ENCODE measurements at regions of chr13 and their contacts with region 1.

Region 1: DNA sequence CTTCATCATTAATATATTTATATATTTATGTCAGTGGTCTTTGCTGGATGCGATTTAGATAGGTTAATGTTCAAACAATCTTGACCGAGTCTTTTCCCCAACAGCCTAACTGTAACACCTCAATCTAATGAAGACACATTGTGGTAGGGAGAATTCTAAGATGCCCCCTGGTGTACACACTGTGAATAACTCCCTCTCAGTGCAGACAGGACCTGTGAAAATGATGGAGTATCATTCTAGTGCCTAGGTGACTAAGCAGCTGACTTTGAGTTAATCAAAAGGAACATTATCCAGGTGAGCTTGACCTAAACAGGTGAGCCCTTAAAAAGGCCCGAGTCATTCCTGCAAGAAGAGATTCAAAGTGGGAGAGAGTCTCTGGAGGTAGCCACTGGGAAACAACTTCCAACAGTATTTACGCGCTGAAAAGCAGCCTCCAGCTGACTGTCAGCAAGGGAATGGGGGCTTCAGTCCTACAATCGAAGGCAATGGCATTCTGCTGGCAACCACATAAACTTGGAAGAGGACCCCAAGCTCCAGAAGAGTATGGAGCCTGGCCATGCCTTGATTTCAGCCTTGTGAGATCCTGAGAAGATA is 28.0 kb upstream of the KBTBD7 start:
- DNase-seq: no peak
- ATAC-seq: peak; percentile 99
- H3K4me3 Mint-ChIP-seq: no peak overlapping the region
- H3K27ac Mint-ChIP-seq: no peak overlapping the region
- H3K4me1 Mint-ChIP-seq: peaks cover 3% of the 10 kb centered on the region
- H3K27me3 Mint-ChIP-seq: no peaks in the 10 kb centered on the region
- CTCF ChIP-seq: no peak

Region 2: DNA sequence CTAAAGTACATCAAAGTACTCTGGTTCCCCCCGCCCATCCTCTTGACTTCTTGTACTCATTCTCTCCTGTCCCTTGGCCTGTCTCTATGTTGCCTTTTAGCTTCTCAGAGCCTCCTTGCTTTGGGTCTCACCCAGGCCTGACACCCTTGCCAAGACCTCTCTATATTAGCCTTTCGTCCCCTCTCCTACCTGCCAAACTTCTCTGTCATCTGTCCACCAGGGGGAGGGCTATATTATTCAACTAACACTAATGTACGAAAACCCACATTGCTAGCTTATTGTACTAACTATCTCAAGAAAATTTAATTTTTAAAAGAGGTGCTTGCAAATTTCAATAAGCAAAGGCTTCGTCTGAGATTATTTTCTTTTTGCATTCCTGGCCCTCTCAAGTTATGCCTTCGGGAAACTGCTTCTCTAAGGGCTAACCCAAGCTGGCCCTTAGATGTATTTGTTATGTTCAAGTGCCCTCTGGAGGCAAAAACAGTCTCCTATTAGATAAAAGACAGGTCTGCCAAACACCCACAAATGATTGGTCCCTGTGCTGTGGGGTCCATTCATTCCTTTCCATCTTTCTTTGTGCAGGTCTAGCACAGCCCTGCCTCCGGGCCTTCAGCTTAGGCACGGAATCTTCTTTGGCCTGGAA is 445.1 kb before region 1 on chr13:
- CTCF ChIA-PET with region 1: no interaction called
- POLR2A ChIA-PET with region 1: no interaction called
- intact Hi-C with region 1: loop called (anchors 1 kb)
- DNase-seq: no peak
- ATAC-seq: peak; percentile 85
- H3K4me3 Mint-ChIP-seq: peak overlapping the region; percentile 70
- H3K27ac Mint-ChIP-seq: peak overlapping the region; percentile 91
- H3K4me1 Mint-ChIP-seq: peaks cover 25% of the 10 kb centered on the region
- H3K27me3 Mint-ChIP-seq: no peaks in the 10 kb centered on the region
- CTCF ChIP-seq: peak; percentile 91

Region 3: DNA sequence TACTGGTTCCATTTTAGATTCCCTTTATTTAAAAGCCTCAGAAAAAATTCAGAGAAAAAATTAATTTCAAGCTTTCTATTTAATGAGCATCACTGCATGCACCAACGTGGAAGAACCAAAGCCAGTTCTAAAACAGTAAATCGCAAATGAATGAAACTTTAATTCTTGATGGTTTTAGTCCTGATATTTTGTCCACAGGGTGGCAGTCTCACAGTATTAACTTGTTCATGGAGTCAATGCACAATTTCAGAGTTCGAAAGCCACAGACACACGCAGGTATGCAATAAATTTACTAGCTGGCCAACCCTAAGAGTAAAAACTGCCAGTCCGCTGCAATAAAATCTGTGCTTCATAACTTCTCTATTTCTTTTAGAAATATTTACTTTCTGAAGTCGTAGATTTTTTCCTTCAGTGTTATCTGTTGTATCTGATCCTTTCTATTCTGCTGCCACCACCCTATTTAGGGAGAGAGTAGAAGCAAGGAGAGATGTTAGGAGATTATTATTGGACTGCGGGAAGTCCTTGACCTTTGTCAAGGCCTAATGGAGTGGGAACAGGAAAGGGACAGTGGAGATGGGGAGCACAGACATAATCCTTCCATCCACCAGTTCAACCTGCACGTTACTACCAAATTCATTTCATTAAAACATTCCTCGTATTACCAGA is 168.0 kb before region 1 on chr13:
- CTCF ChIA-PET with region 1: interaction called, 8 read pairs
- POLR2A ChIA-PET with region 1: no interaction called
- intact Hi-C with region 1: loop called (anchors 1 kb)
- DNase-seq: no peak
- ATAC-seq: peak; percentile 33
- H3K4me3 Mint-ChIP-seq: peak overlapping the region; percentile 68
- H3K27ac Mint-ChIP-seq: peak overlapping the region; percentile 80
- H3K4me1 Mint-ChIP-seq: peaks cover 58% of the 10 kb centered on the region
- H3K27me3 Mint-ChIP-seq: no peaks in the 10 kb centered on the region
- CTCF ChIP-seq: peak; percentile 76

Region 4: GRCh38 chr13:41132512-41133152 is 89.7 kb before region 1 on chr13 and contains the start of gene KBTBD6:
- CTCF ChIA-PET with region 1: no interaction called
- POLR2A ChIA-PET with region 1: no interaction called
- intact Hi-C with region 1: loop called (anchors 1 kb)
- DNase-seq: peak; percentile 83
- ATAC-seq: peak; percentile 97
- H3K4me3 Mint-ChIP-seq: peak within 1 kb of the TSS; percentile 98
- H3K27ac Mint-ChIP-seq: peak within 1 kb of the TSS; percentile 91
- H3K4me1 Mint-ChIP-seq: peaks cover 47% of the 10 kb centered on the region
- H3K27me3 Mint-ChIP-seq: no peaks in the 10 kb centered on the region
- CTCF ChIP-seq: no peak
- total RNA-seq, gene KBTBD6: 5.1 and 6.0 TPM in 2 replicates

Region 5: DNA sequence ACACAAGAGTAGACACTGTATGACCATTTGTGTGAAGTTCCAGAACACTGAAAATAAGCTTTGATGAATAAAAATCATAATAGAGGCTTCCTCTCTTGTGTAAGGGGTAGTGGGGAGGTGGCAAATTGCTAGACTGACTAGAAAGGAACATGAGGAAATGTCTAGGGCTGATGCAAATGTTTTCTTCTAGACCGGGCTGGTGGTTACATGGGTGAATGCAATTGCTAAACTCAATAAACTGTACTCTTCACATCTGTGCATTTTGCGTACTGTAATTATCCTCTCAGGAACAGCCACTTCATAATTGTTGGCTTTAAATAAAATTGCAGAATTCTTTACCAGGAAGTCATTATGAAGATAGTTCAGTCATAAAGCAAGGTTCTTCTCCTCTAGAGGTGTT is 22.8 kb before region 1 on chr13:
- CTCF ChIA-PET with region 1: interaction called, 8 read pairs
- POLR2A ChIA-PET with region 1: no interaction called
- intact Hi-C with region 1: loop called (anchors 1 kb)
- DNase-seq: no peak
- ATAC-seq: peak; percentile 90
- H3K4me3 Mint-ChIP-seq: peak overlapping the region; percentile 55
- H3K27ac Mint-ChIP-seq: peak overlapping the region; percentile 87
- H3K4me1 Mint-ChIP-seq: peaks cover 47% of the 10 kb centered on the region
- H3K27me3 Mint-ChIP-seq: no peaks in the 10 kb centered on the region
- CTCF ChIP-seq: no peak

Measured in activated B cell treated with CpG ODN at 0.5 μM for 24 hours (primary cell).